ENCODE measurements at regions of chr1 and their contacts with region 1.

Region 1: GRCh38 chr1:167220537-167221125 is at the start of gene POU2F1:
- DNase-seq: peak; percentile 98
- H3K4me3 Mint-ChIP-seq: peak within 1 kb of the TSS; percentile 91
- H3K27ac Mint-ChIP-seq: peak within 1 kb of the TSS; percentile 93
- H3K4me1 Mint-ChIP-seq: peaks cover 27% of the 10 kb centered on the region
- H3K27me3 Mint-ChIP-seq: peaks cover 3% of the 10 kb centered on the region
- total RNA-seq, gene POU2F1: 21.3 and 21.9 TPM in 2 replicates

Region 2: GRCh38 chr1:166838766-166839599 is 381.6 kb before region 1 on chr1 and contains the start of gene POGK:
- intact Hi-C with region 1: loop called (anchors 1 kb)
- DNase-seq: peak; percentile 84
- H3K4me3 Mint-ChIP-seq: peak within 1 kb of the TSS; percentile 94
- H3K27ac Mint-ChIP-seq: peak within 1 kb of the TSS; percentile 97
- H3K4me1 Mint-ChIP-seq: peaks cover 52% of the 10 kb centered on the region
- H3K27me3 Mint-ChIP-seq: peaks cover 9% of the 10 kb centered on the region
- total RNA-seq, gene POGK: 46.6 and 49.7 TPM in 2 replicates

Region 3: GRCh38 chr1:166910396-166910994 is 310.1 kb before region 1 on chr1:
- intact Hi-C with region 1: loop called (anchors 5 kb)
- DNase-seq: peak; percentile 71
- H3K4me3 Mint-ChIP-seq: no peak overlapping the region
- H3K27ac Mint-ChIP-seq: no peak overlapping the region
- H3K4me1 Mint-ChIP-seq: peaks cover 26% of the 10 kb centered on the region
- H3K27me3 Mint-ChIP-seq: peaks cover 3% of the 10 kb centered on the region

Region 4: DNA sequence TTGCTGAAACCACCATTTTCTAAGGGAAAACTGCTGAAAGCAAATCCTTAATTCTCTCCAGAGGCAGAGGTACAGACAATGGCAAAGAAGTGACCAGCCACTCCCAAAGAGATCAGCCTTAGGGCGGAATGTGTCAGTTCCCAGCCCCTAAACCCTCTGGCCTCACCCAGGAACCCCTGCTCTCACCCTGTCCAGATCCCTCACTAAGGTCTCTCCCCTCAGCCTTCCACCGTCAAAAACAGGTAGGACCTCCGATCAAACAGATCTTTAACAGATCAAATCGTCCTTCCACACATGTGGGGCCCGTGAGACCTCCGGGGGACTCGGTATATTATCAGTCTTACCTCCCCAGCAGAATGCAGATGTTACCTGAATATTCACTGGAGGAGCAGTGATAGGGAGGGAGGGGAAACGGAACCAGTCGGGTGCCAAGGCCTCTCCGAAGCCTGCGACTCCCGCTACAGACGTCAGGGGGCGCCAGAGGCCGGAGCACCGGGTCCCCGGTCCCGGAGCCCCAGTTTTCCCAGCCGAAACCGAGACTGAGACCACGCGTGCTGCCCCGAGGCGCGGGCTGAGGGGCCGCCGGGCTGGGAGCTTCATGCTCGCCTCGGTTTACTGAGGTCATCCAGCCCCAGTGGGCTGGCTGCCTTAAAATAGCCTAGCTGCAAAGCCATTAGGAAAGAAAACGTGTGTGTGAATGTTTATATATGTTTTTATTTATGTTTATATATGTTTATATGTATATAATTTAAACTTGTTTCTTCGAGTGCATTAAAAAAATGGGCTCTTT is 154.1 kb before region 1 on chr1:
- intact Hi-C with region 1: loop called (anchors 1 kb)
- DNase-seq: peak; percentile 67
- H3K4me3 Mint-ChIP-seq: peak overlapping the region; percentile 41
- H3K27ac Mint-ChIP-seq: no peak overlapping the region
- H3K4me1 Mint-ChIP-seq: peaks cover 3% of the 10 kb centered on the region
- H3K27me3 Mint-ChIP-seq: peaks cover 9% of the 10 kb centered on the region

Region 5: DNA sequence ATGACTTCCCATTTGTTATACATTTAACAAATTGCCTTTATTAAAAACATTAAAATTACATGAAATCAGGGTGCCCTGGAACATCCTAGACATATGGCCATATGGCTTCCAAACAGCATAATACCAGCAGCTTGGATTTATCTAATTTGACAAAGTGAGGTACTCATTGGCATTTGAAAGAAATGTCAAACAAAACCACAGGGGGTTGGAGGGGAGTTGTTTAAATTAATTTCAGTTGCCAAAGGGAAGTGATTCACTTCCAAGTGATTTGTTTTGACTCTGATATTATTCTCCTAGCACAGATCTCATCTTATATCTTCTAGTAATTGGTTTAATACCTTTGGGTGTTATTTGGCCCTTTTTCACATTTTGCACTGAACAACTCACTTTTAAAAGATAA is 24.5 kb before region 1 on chr1:
- intact Hi-C with region 1: no loop called
- DNase-seq: no peak
- H3K4me3 Mint-ChIP-seq: no peak overlapping the region
- H3K27ac Mint-ChIP-seq: no peak overlapping the region
- H3K4me1 Mint-ChIP-seq: peaks cover 14% of the 10 kb centered on the region
- H3K27me3 Mint-ChIP-seq: peaks cover 5% of the 10 kb centered on the region

Region 6: GRCh38 chr1:167232801-167233200 is 12.2 kb after region 1 on chr1:
- intact Hi-C with region 1: no loop called
- DNase-seq: no peak
- H3K4me3 Mint-ChIP-seq: no peak overlapping the region
- H3K27ac Mint-ChIP-seq: no peak overlapping the region
- H3K4me1 Mint-ChIP-seq: peaks cover 18% of the 10 kb centered on the region
- H3K27me3 Mint-ChIP-seq: no peaks in the 10 kb centered on the region

Region 7: DNA sequence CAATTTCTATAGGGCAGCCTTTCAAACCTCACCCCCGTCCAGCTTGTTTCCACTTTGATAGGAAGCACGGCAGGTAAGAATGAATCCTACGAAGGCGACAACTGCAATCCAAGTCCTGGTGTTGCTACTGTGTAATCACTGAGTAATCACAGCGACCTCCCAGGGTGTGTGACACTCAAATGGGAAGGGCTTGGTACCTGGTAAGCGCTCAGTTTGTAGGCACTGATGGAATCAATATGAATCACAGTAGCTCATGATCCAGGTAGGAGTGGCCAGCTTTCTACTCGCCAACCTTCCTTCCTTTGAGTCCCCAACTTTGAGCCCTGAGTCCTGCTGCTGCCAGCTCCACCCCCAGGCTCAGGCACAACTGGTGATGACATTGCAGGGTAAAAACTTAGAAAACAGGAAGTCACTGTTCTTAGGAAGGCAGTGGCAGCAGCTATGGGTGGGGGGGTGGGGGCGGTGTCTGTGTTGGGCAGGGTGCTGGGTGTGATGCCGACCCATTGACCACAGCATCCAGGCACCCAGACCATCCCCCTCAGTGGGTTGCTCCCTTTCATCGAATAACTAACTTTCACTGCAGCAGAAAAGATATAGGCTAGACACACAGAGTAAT is 227.0 kb after region 1 on chr1:
- intact Hi-C with region 1: loop called (anchors 2 kb)
- DNase-seq: peak; percentile 69
- H3K4me3 Mint-ChIP-seq: peak overlapping the region; percentile 65
- H3K27ac Mint-ChIP-seq: peak overlapping the region; percentile 94
- H3K4me1 Mint-ChIP-seq: peaks cover 64% of the 10 kb centered on the region
- H3K27me3 Mint-ChIP-seq: no peaks in the 10 kb centered on the region

Region 8: DNA sequence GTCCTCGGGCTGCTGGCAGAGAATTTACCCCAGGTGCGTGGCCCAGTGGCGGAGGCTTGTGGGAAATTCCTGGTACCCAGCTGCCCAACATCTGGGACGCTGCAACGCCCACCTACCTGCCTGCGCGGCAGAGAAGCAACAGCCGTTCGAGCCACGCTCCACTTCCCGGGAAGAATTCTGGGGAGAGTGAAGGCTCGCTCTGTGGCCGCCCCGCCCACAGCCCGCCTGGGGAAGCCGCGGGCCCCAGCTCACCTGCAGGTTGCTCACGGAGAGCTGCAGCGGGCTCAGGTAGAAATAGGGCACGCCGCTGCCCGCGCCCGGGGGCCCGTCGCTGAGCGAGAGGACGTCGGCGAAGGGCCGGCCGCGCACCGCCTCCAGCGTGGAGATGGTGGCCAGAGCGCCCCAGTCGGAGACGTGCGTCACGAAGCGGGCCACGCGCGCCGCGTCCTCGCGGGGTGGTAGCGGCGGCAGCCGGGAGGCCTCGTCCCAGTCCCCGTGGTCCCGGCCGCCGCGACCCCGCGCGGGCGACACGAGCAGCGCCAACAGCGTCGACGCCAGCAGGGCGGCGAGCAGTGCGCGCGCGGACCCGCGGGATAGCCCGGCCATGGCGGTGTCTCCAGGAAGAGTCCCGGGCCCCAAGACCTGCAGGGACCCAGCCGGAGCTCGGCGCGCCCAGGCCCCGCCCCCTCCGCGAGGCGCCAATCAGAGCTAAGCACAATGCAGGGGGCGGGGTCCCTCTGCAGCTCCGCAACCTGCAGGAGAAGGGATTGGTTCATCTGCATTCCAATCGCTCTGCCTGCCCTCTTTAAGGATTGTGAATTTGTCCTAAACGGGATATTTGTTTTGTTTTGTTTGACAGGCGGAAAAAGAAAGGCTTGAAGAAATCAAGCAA is 332.8 kb after region 1 on chr1 and contains the start of gene CREG1:
- intact Hi-C with region 1: loop called (anchors 5 kb)
- DNase-seq: peak; percentile 86
- H3K4me3 Mint-ChIP-seq: peak within 1 kb of the TSS; percentile 86
- H3K27ac Mint-ChIP-seq: peak within 1 kb of the TSS; percentile 40
- H3K4me1 Mint-ChIP-seq: peaks cover 27% of the 10 kb centered on the region
- H3K27me3 Mint-ChIP-seq: peaks cover 8% of the 10 kb centered on the region
- total RNA-seq, gene CREG1: 13.8 and 15.6 TPM in 2 replicates

Region 9: DNA sequence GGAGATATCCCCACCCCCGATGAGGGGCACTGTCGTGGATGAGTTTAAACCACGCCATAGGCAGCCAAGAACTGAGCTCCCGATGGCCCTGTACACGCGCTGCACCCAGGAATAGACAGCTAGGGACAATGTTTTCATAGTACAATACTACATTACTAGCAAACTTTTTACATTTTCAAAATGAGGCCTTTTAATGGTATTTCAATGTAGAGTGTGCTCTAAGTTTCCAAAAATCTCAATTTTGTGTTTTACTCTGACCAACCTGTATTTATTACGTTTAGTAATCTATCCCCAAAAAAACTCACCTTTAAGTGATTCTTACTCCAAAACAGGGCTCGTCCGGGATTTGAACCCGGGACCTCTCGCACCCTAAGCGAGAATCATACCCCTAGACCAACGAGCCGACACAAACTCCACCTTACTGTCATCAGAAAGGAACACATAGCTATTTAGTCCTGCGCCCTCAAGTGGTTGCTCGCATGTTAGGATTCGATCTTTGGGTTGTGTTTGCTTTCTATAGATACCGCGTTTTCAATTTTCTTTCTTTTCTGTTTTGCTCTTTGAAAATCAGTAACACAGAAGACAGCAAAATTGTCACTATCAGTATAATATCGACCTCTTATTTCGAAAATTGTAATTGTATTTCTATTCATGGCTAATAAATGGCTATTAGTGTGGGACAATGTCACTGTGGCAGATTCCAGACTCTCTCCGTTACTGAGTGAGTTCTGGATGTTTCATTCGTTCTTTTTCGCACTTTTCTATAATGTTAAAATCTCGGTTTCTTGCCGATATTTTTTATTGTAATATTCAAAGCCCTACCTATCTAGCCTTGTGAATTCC is 494.7 kb after region 1 on chr1:
- intact Hi-C with region 1: loop called (anchors 2 kb)
- DNase-seq: peak; percentile 83
- H3K4me3 Mint-ChIP-seq: peak overlapping the region; percentile 87
- H3K27ac Mint-ChIP-seq: peak overlapping the region; percentile 87
- H3K4me1 Mint-ChIP-seq: peaks cover 29% of the 10 kb centered on the region
- H3K27me3 Mint-ChIP-seq: peaks cover 4% of the 10 kb centered on the region

Measured in activated T-helper 2 cell treated with anti-CD3 and anti-CD28 coated beads, Interferon-gamma antibody, Interleukin-2, Interleukin-4, amounts not matched to agents 10 μg/mL and 5 μg/mL and 100 μg/mL, durations not matched to agents 14 hours and 24 hours and 36 hours (primary cell).